PC-9 (cell line): ENCODE measurements at regions of chr11 and their contacts with region 1.

Region 1: GRCh38 chr11:77557554-77557953 is 32.2 kb upstream of the AQP11 start:
- DNase-seq: peak in 1 of 2 experiments; percentile 23
- H3K4me3 ChIP-seq: no peak overlapping the region
- H3K27ac ChIP-seq: no peak overlapping the region
- H3K4me1 ChIP-seq: peaks cover 14% of the 10 kb centered on the region
- H3K27me3 ChIP-seq: no peaks in the 10 kb centered on the region
- CTCF ChIP-seq: peak; percentile 50

Region 2: DNA sequence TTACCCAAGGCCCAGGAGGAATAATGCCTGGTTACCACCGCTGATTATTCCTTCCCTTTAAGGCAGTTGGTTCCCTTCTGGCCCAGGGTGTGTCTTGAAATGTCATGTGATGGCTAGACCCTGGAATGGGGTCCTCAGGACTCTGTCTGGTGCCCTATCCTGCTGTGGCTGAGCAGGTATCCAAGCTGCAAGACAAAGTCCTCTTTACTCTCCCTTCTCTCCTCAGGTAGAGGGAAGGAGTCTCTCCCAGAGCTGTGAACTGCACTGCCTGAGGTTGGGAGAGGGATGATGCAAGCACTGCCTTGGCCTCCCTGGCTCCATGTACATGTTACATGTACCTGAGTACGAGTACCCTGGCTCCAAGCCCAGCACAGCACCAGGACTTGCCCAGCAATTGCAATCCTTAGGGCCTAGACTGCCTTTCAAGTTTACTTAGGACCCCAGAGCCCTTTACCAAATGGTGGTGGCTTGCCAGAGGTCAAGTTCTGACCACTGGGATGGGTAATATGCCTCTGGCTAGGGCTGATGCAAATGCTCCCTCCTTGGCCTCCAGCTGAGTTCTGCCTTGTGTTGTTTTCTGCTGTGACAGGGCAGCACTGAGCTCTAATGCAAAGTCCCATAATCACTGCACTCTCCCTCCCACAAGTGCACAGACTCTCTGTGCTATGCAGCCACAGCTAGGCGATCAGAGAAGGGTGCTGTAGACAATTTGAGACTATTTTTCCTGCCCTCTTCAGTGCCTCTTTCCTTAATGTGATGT is 11.5 kb after region 1 on chr11:
- CTCF ChIA-PET with region 1: no interaction called
- POLR2A ChIA-PET with region 1: interaction called, 13 read pairs
- intact Hi-C with region 1: no loop called
- DNase-seq: no peak
- H3K4me3 ChIP-seq: no peak overlapping the region
- H3K27ac ChIP-seq: no peak overlapping the region
- H3K4me1 ChIP-seq: no peaks in the 10 kb centered on the region
- H3K27me3 ChIP-seq: no peaks in the 10 kb centered on the region
- CTCF ChIP-seq: no peak

Region 3: GRCh38 chr11:77589521-77590193 is 32.1 kb after region 1 on chr11 and contains the start of gene AQP11:
- CTCF ChIA-PET with region 1: no interaction called
- POLR2A ChIA-PET with region 1: no interaction called
- intact Hi-C with region 1: no loop called
- DNase-seq: peak; percentile 59 to 91
- H3K4me3 ChIP-seq: peak within 1 kb of the TSS; percentile 71
- H3K27ac ChIP-seq: no peak within 1 kb of the TSS
- H3K4me1 ChIP-seq: peaks cover 8% of the 10 kb centered on the region
- H3K27me3 ChIP-seq: no peaks in the 10 kb centered on the region
- CTCF ChIP-seq: no peak
- total RNA-seq, gene AQP11: 1.1 and 1.4 TPM in 2 replicates

Region 4: DNA sequence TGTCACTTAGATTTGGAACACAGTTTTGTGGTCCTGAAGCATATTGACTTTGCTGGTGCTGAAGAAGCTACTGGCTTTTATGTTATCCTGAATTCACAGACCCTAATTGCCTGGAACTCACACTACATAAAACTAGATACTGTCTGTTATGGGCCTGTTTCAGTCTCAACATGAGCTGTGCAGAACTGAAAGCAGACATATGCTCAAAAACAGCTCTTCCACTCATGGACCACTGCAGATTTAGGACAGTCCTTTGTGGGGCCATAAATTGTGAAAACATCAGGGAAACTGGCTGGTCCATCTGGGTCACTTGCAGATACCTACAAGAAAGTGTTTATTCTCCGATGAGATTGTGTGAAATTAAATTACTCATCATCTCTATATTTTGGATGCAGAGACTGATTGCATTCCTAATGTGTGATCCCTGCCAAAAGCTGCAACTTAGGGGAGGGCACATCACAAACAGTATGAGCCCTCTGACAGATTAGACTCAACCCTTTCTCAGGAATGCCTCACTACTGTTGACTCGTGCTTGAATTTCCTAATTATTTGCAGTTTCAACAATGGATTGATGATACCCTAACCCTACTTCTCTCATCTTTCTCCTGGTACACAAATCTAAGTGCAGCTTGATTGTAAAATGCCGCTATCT is 90.2 kb after region 1 on chr11:
- CTCF ChIA-PET with region 1: no interaction called
- POLR2A ChIA-PET with region 1: no interaction called
- intact Hi-C with region 1: no loop called
- DNase-seq: no peak
- H3K4me3 ChIP-seq: no peak overlapping the region
- H3K27ac ChIP-seq: no peak overlapping the region
- H3K4me1 ChIP-seq: peaks cover 7% of the 10 kb centered on the region; the same call in 1 of the 2 replicates
- H3K27me3 ChIP-seq: no peaks in the 10 kb centered on the region
- CTCF ChIP-seq: no peak